B cell (primary cell): ENCODE measurements at regions of chr17 and their contacts with region 1.

Region 1: GRCh38 chr17:74368092-74369081 is 1.1 kb downstream of the GPR142 start:
- DNase-seq: peak; percentile 79
- ATAC-seq: peak; percentile 82
- H3K4me3 ChIP-seq: no peak overlapping the region
- H3K4me3 Mint-ChIP-seq: no peak overlapping the region
- H3K27ac ChIP-seq: no peak overlapping the region
- H3K27ac Mint-ChIP-seq: no peak overlapping the region
- H3K4me1 ChIP-seq: peaks cover 12 to 16% of the 10 kb centered on the region in 2 donors
- H3K4me1 Mint-ChIP-seq: peaks cover 12% of the 10 kb centered on the region
- H3K27me3 ChIP-seq: peaks cover 0 to 25% (median 6%) of the 10 kb centered on the region in 4 experiments
- H3K27me3 Mint-ChIP-seq: peaks cover 19% of the 10 kb centered on the region
- CTCF ChIP-seq: peak; percentile 98

Region 2: DNA sequence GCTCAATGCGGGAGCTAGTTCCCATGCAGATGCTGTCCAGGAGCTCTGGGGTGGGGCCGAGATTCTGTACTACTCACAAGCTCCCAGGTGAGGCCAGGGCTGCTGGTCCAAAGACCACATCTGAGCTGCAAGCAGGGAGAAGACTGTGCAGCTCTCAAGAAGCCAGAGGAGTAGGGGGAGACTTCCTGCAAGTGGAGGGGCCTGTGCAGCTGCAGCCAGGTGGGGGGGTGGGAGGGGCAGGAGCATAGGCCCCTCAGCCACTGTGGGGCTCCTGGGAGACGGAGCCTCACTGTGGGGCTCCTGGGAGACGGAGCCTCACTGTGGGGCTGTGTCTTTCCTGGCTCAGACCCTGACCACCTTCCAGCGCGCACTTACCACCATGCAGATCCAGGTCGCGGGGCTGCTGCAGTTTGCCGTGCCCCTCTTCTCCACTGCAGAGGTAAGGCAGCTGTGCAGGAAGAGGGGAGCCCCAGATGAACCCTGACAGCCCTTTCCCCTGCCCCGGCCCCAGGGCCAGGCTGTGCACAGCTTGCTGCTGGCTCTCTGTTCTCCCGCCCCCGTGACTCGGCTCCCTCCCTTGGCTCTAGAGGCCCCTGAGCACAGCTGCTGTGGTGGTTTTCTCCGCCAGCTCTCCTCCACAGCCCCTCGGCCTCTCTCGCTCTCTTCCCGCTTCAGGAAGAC is 118.7 kb before region 1 on chr17:
- CTCF ChIA-PET with region 1: no interaction called
- POLR2A ChIA-PET with region 1: no interaction called
- intact Hi-C with region 1: no loop called
- DNase-seq: no peak
- ATAC-seq: no peak
- H3K4me3 ChIP-seq: no peak overlapping the region
- H3K4me3 Mint-ChIP-seq: no peak overlapping the region
- H3K27ac ChIP-seq: no peak overlapping the region
- H3K27ac Mint-ChIP-seq: no peak overlapping the region
- H3K4me1 ChIP-seq: no peaks in the 10 kb centered on the region
- H3K4me1 Mint-ChIP-seq: no peaks in the 10 kb centered on the region
- H3K27me3 ChIP-seq: peaks cover 0 to 2% (median 0%) of the 10 kb centered on the region in 4 experiments
- H3K27me3 Mint-ChIP-seq: no peaks in the 10 kb centered on the region
- CTCF ChIP-seq: no peak

Region 3: DNA sequence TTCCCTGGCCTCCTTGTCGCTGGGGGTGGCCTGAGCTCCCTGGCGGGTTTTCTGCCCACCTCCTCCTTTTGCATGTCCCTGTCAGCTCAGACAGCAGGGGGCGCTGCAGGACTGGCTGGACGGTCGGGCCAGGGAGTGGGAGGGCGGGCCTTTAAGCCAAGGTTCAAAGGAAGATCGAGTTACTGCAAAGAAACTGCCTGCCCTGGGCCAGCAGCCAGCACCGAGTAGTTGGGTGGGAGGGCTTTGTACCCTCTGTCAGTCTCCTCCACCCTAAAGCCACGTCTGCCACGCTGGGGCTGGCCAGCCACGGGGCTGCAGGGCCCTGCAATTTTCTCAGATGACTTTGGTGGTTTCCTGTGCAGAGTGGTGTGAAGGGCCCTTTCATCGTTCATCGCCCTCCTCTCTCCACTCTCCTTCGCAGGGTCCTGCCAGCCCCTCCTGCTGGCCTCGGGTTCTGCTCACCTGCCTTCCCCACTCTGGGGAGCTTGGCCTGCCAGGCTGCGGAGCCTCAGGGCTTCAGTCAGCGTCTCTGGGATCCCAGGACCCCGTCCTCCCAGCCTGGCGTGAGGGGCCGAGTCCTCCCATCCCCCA is 11.2 kb after region 1 on chr17:
- CTCF ChIA-PET with region 1: interaction called, 41 read pairs
- POLR2A ChIA-PET with region 1: no interaction called
- intact Hi-C with region 1: no loop called
- DNase-seq: peak; percentile 83
- ATAC-seq: peak; percentile 73
- H3K4me3 ChIP-seq: no peak overlapping the region
- H3K4me3 Mint-ChIP-seq: no peak overlapping the region
- H3K27ac ChIP-seq: no peak overlapping the region
- H3K27ac Mint-ChIP-seq: no peak overlapping the region
- H3K4me1 ChIP-seq: peaks cover 5 to 9% of the 10 kb centered on the region in 2 donors
- H3K4me1 Mint-ChIP-seq: no peaks in the 10 kb centered on the region
- H3K27me3 ChIP-seq: peaks cover 0 to 15% (median 3%) of the 10 kb centered on the region in 4 experiments
- H3K27me3 Mint-ChIP-seq: peaks cover 19% of the 10 kb centered on the region
- CTCF ChIP-seq: peak; percentile 76

Region 4: DNA sequence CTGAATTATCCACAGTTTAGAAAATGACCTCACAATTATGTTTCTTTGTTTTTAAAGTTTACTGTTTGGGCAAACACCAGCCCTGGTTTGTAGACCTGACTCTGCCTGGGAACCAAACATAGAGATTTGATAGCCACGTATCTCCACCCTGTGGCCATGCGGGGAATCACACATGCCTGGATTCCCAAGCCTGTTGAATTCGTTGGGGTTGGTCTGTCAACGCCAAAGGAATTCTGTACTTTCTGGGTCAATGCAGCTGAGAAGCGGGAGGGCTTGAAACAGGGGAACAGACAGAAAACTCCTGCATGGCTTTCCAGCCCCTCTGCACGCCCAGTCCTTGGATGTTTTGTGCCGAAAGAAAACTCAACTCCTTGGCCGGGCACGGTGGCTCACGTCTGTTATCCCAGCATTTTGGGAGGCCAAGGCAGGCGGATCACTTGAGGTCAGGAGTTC is 125.0 kb after region 1 on chr17:
- CTCF ChIA-PET with region 1: interaction called, 18 read pairs
- POLR2A ChIA-PET with region 1: no interaction called
- intact Hi-C with region 1: loop called (anchors 1 kb)
- DNase-seq: peak; percentile 68
- ATAC-seq: peak; percentile 80
- H3K4me3 ChIP-seq: no peak overlapping the region
- H3K4me3 Mint-ChIP-seq: no peak overlapping the region
- H3K27ac ChIP-seq: no peak overlapping the region
- H3K27ac Mint-ChIP-seq: no peak overlapping the region
- H3K4me1 ChIP-seq: no peaks in the 10 kb centered on the region
- H3K4me1 Mint-ChIP-seq: no peaks in the 10 kb centered on the region
- H3K27me3 ChIP-seq: no peaks in the 10 kb centered on the region
- H3K27me3 Mint-ChIP-seq: peaks cover 10% of the 10 kb centered on the region
- CTCF ChIP-seq: peak; percentile 90

Region 5: GRCh38 chr17:74528491-74529199 is 160.3 kb after region 1 on chr17:
- CTCF ChIA-PET with region 1: interaction called, 32 read pairs
- POLR2A ChIA-PET with region 1: no interaction called
- intact Hi-C with region 1: no loop called
- DNase-seq: peak; percentile 83
- ATAC-seq: peak; percentile 84
- H3K4me3 ChIP-seq: no peak overlapping the region
- H3K4me3 Mint-ChIP-seq: no peak overlapping the region
- H3K27ac ChIP-seq: no peak overlapping the region
- H3K27ac Mint-ChIP-seq: peak overlapping the region; percentile 11
- H3K4me1 ChIP-seq: peaks cover 28 to 39% of the 10 kb centered on the region in 2 donors
- H3K4me1 Mint-ChIP-seq: peaks cover 29% of the 10 kb centered on the region
- H3K27me3 ChIP-seq: peaks cover 0 to 15% (median 0%) of the 10 kb centered on the region in 4 experiments
- H3K27me3 Mint-ChIP-seq: peaks cover 11% of the 10 kb centered on the region
- CTCF ChIP-seq: no peak

Region 6: DNA sequence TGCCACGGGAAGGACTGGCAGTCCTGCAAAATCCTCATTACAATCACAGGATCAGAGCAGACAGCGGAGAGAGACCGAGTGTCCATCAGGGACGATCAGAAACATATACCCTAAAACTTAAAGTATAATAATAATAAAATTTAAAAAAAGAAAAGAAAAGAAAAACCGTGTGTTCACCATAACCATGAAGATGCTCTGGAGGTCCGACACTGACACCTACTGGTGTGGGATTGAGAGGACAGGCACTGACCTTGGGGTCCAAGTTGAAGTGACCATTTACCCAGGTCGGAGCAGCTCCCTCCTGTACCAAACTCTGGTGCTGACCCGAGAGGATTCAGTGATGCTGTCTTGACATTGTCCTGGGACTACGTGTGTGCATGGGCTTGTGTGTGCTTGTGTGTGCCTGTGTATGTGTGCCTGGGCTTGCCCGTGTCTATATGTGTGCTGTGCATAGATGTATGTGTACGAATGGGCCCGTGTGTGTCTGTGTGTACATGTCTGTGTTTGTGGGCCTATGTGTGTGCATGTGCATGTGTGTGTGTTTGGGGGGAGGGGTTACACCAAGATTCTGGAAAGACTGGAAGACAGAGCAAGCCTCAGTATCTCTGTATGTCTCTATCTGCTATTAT is 233.7 kb after region 1 on chr17:
- CTCF ChIA-PET with region 1: interaction called, 3 read pairs
- POLR2A ChIA-PET with region 1: no interaction called
- intact Hi-C with region 1: loop called (anchors 5 kb)
- DNase-seq: peak; percentile 53
- ATAC-seq: no peak
- H3K4me3 ChIP-seq: no peak overlapping the region
- H3K4me3 Mint-ChIP-seq: no peak overlapping the region
- H3K27ac ChIP-seq: no peak overlapping the region
- H3K27ac Mint-ChIP-seq: no peak overlapping the region
- H3K4me1 ChIP-seq: peaks cover 49 to 52% of the 10 kb centered on the region in 2 donors
- H3K4me1 Mint-ChIP-seq: peaks cover 51% of the 10 kb centered on the region
- H3K27me3 ChIP-seq: peaks cover 0 to 2% (median 0%) of the 10 kb centered on the region in 4 experiments
- H3K27me3 Mint-ChIP-seq: no peaks in the 10 kb centered on the region
- CTCF ChIP-seq: peak; percentile 66

Region 7: DNA sequence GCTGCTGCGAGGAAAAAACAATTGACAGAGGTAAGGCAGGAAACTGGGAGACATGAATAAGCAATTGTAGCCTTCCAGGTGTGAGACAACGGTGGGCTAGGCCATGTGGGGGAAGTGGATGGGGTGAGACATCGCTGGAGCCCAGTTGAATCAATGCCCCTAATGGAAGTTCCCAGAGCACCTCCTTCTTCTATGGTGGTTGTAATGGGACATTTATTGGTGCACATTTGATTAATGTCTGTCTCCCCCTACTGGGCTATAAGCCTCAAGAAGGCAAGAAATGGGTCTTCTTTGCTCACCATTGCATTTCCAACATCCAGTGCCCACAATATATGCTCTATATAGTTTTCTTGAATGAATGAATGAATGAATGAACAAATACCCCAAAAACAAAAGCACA is 277.8 kb after region 1 on chr17:
- CTCF ChIA-PET with region 1: interaction called, 6 read pairs
- POLR2A ChIA-PET with region 1: no interaction called
- intact Hi-C with region 1: loop called (anchors 1 kb)
- DNase-seq: peak; percentile 60
- ATAC-seq: peak; percentile 50
- H3K4me3 ChIP-seq: no peak overlapping the region
- H3K4me3 Mint-ChIP-seq: no peak overlapping the region
- H3K27ac ChIP-seq: no peak overlapping the region
- H3K27ac Mint-ChIP-seq: peak overlapping the region; percentile 50
- H3K4me1 ChIP-seq: peaks cover 32 to 37% of the 10 kb centered on the region in 2 donors
- H3K4me1 Mint-ChIP-seq: peaks cover 43% of the 10 kb centered on the region
- H3K27me3 ChIP-seq: peaks cover 0 to 32% (median 12%) of the 10 kb centered on the region in 4 experiments
- H3K27me3 Mint-ChIP-seq: peaks cover 47% of the 10 kb centered on the region
- CTCF ChIP-seq: peak; percentile 56